H1 (cell line): ENCODE measurements at regions of chr2 and their contacts with region 1.

Region 1: GRCh38 chr2:201071479-201072200 is at the starts of genes HYCC2 and NDUFB3:
- DNase-seq: peak; percentile 85 to 90
- H3K4me3 ChIP-seq: peak within 1 kb of the TSS; percentile 82 to 99 (median 87)
- H3K27ac ChIP-seq: peak within 1 kb of the TSS; percentile 98
- H3K4me1 ChIP-seq: peaks cover 0 to 3% (median 0%) of the 10 kb centered on the region in 4 experiments; a peak in 2 of 7 replicates
- H3K27me3 ChIP-seq: no peaks in the 10 kb centered on the region
- CTCF ChIP-seq: peak; percentile 5 to 28 (median 24)
- EP300 ChIP-seq: peak in 1 of 2 experiments; percentile 11; a peak in 1 of 3 replicates
- POLR2A ChIP-seq: peak in 1 of 2 experiments; percentile 64; a peak in 1 of 3 replicates
- RAD21 ChIP-seq: peak in 1 of 2 experiments; percentile 19; a peak in 2 of 4 replicates
- total RNA-seq, gene HYCC2: 7.8 and 8.0 TPM in 2 replicates
- total RNA-seq, gene NDUFB3: 55.3 and 57.5 TPM in 2 replicates

Region 2: GRCh38 chr2:201057087-201057521 is 14.5 kb before region 1 on chr2:
- CTCF ChIA-PET with region 1: interaction called, 15 read pairs
- POLR2A ChIA-PET with region 1: interaction called, 3 read pairs
- DNase-seq: no peak
- H3K4me3 ChIP-seq: no peak overlapping the region
- H3K27ac ChIP-seq: no peak overlapping the region
- H3K4me1 ChIP-seq: no peaks in the 10 kb centered on the region
- H3K27me3 ChIP-seq: no peaks in the 10 kb centered on the region
- CTCF ChIP-seq: no peak
- EP300 ChIP-seq: no peak
- POLR2A ChIP-seq: no peak
- RAD21 ChIP-seq: no peak

Region 3: GRCh38 chr2:201109186-201109585 is 37.5 kb after region 1 on chr2:
- CTCF ChIA-PET with region 1: interaction called, 10 read pairs
- POLR2A ChIA-PET with region 1: no interaction called
- DNase-seq: no peak
- H3K4me3 ChIP-seq: no peak overlapping the region
- H3K27ac ChIP-seq: no peak overlapping the region
- H3K4me1 ChIP-seq: no peaks in the 10 kb centered on the region
- H3K27me3 ChIP-seq: no peaks in the 10 kb centered on the region
- CTCF ChIP-seq: no peak
- EP300 ChIP-seq: no peak
- POLR2A ChIP-seq: no peak
- RAD21 ChIP-seq: no peak

Region 4: GRCh38 chr2:201780674-201781581 is 709.3 kb after region 1 on chr2 and contains the start of gene ALS2:
- CTCF ChIA-PET with region 1: no interaction called
- POLR2A ChIA-PET with region 1: no interaction called
- DNase-seq: peak; percentile 94 to 98
- H3K4me3 ChIP-seq: peak within 1 kb of the TSS; percentile 87 to 93 (median 88)
- H3K27ac ChIP-seq: peak within 1 kb of the TSS; percentile 78
- H3K4me1 ChIP-seq: peaks cover 0 to 7% (median 3%) of the 10 kb centered on the region in 4 experiments; a peak in 4 of 7 replicates
- H3K27me3 ChIP-seq: no peaks in the 10 kb centered on the region
- CTCF ChIP-seq: no peak
- EP300 ChIP-seq: no peak; a peak in 1 of 3 replicates
- POLR2A ChIP-seq: peak; percentile 48 to 83
- RAD21 ChIP-seq: no peak
- total RNA-seq, gene ALS2: 34.5 and 36.4 TPM in 2 replicates